Heart left ventricle (tissue), 16 donors: ENCODE measurements at regions of chr4 and their contacts with region 1.

Region 1: GRCh38 chr4:10403633-10404445 is 53.4 kb downstream of the ZNF518B start:
- DNase-seq: no peak
- ATAC-seq: peak; percentile 37 to 64 (median 46)
- H3K4me3 ChIP-seq: no peak overlapping the region
- H3K27ac ChIP-seq: no peak overlapping the region
- H3K4me1 ChIP-seq: peaks cover 0 to 4% (median 0%) of the 10 kb centered on the region in 12 donors
- H3K27me3 ChIP-seq: no peaks in the 10 kb centered on the region
- CTCF ChIP-seq: peak; percentile 24 to 65 (median 52)
- POLR2A ChIP-seq: no peak

Region 2: DNA sequence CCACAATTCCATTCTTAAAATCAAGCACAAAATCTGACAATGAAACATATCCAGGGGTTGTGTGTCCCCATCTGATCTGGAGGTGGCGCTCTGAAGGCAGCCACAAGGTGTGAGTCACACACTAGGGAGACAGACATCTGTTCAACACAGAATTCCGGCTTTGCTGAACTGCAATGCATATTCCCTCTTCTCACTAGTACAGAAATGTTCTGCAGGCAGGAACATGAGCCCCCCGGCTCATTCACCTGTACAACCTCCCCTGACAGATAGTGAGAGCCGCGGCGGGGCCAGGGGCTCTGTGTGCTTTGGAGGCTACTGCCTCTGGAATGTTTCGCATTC is 329.1 kb before region 1 on chr4:
- intact Hi-C with region 1: loop called in 1 of 10 experiments (anchors 5 kb)
- DNase-seq: no peak
- ATAC-seq: peak in 1 of 4 donors; percentile 19
- H3K4me3 ChIP-seq: no peak overlapping the region
- H3K27ac ChIP-seq: no peak overlapping the region
- H3K4me1 ChIP-seq: peaks cover 0 to 24% (median 17%) of the 10 kb centered on the region in 12 donors
- H3K27me3 ChIP-seq: no peaks in the 10 kb centered on the region
- CTCF ChIP-seq: peak in 8 of 12 donors; percentile 9 to 38 (median 26)
- POLR2A ChIP-seq: no peak

Region 3: DNA sequence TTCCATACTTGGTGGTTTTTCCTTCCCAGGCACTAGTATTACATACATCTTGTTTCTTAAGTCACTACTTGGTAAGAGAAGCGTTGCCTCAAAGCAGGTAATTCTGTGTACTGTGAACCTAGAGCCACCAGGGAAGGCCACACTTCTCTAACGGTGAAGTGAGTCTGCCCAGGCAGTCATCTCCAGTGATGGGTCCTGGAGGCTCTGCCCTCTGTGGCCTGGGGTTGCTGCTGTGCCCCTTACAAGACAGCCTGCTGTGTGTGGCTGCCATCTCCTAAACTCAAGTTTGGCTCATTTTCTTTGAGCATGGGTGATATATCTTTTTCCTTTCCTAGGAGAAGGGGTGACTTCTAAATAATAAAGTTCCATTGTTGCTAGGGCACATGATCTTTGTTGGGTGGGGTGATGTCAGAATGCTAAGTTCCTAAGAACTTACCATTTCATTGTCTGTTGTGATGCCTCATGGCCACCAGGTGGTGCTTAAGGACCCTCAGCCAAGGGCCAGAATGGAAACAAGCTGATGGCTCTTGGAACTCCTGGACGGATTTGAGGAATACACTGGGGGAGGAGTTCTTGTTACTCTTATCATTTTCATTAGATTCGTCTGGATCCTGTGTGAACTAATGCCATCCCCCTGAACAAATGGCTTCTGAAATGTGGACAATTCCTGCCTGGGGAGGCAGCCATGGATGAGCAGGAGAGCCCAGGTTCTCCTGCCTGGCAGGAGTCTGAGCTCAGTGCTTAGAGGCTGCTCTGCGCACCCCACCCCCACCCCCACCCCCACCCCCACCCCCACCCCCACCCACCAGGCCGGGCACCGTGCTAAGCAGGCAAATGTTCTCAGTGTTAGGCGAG is 246.1 kb before region 1 on chr4:
- intact Hi-C with region 1: loop called in 7 of 10 experiments (anchors 1 to 5 kb)
- DNase-seq: peak in 4 of 5 donors; percentile 35 to 50 (median 44)
- ATAC-seq: peak; percentile 64 to 81 (median 72)
- H3K4me3 ChIP-seq: no peak overlapping the region
- H3K27ac ChIP-seq: peak overlapping the region in 1 of 12 donors; percentile 71
- H3K4me1 ChIP-seq: peaks cover 0 to 3% (median 0%) of the 10 kb centered on the region in 12 donors
- H3K27me3 ChIP-seq: peaks cover 0 to 3% (median 0%) of the 10 kb centered on the region in 9 donors
- CTCF ChIP-seq: peak; percentile 70 to 85 (median 78)
- POLR2A ChIP-seq: no peak

Region 4: GRCh38 chr4:10164877-10165283 is 239.0 kb before region 1 on chr4:
- intact Hi-C with region 1: loop called (anchors 1 to 5 kb)
- DNase-seq: peak in 1 of 5 donors; percentile 33
- ATAC-seq: peak in 1 of 4 donors; percentile 36
- H3K4me3 ChIP-seq: no peak overlapping the region
- H3K27ac ChIP-seq: no peak overlapping the region
- H3K4me1 ChIP-seq: peaks cover 0 to 11% (median 0%) of the 10 kb centered on the region in 12 donors
- H3K27me3 ChIP-seq: no peaks in the 10 kb centered on the region
- CTCF ChIP-seq: peak; percentile 47 to 73 (median 64)
- POLR2A ChIP-seq: no peak

Region 5: GRCh38 chr4:10565166-10565780 is 161.4 kb after region 1 on chr4:
- intact Hi-C with region 1: no loop called
- DNase-seq: no peak
- ATAC-seq: no peak
- H3K4me3 ChIP-seq: no peak overlapping the region
- H3K27ac ChIP-seq: no peak overlapping the region
- H3K4me1 ChIP-seq: no peaks in the 10 kb centered on the region
- H3K27me3 ChIP-seq: peaks cover 0 to 9% (median 0%) of the 10 kb centered on the region in 9 donors
- CTCF ChIP-seq: no peak
- POLR2A ChIP-seq: no peak